Astrocyte of the cerebellum (primary cell): ENCODE measurements at regions of chr1 and their contacts with region 1.

Region 1: GRCh38 chr1:223429313-223429731 is 36.1 kb downstream of the CCDC185 start:
- DNase-seq: no peak
- H3K4me3 ChIP-seq: no peak overlapping the region
- CTCF ChIP-seq: no peak

Region 2: GRCh38 chr1:223393275-223394241 is 35.8 kb before region 1 on chr1 and contains the start of gene CCDC185:
- in situ Hi-C with region 1: no loop called
- DNase-seq: no peak
- H3K4me3 ChIP-seq: peak within 1 kb of the TSS; percentile 35
- CTCF ChIP-seq: no peak

Region 3: DNA sequence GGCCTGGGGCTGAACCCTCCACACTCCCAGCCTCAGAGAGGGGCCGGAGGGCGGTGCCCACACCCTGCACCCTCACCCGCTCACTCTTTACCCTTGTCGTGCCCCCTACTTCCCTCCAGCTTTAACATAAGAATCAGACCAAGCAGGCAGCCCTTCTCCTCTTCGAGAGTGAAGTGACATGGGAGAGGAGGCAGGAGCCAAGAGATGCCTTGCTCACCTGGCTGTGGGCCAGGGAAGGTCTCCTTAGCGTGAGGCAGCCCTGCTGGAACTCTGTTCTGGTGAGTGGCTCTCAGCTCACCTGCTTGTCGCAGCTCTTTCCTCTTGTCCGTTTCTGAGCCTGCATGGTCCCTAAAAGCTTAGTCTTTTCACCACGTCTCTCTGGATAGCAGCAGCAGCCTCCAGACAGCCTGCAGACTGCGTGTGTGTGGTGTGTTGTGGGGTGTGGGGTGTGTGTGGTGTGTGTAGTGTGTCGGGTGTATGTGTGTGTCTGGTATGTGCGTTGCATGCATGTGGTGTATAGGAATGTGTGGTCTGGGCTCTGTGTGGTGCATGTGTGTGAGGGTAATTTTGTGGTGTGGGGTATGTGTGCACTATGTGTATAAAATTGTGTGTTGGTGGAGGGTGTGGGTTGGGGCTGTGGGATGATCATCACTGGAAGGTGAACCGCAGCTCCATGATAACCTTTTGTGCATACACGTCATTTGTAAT is 50.5 kb after region 1 on chr1:
- in situ Hi-C with region 1: loop called (anchors 5 kb)
- DNase-seq: no peak
- H3K4me3 ChIP-seq: no peak overlapping the region
- CTCF ChIP-seq: no peak

Region 4: DNA sequence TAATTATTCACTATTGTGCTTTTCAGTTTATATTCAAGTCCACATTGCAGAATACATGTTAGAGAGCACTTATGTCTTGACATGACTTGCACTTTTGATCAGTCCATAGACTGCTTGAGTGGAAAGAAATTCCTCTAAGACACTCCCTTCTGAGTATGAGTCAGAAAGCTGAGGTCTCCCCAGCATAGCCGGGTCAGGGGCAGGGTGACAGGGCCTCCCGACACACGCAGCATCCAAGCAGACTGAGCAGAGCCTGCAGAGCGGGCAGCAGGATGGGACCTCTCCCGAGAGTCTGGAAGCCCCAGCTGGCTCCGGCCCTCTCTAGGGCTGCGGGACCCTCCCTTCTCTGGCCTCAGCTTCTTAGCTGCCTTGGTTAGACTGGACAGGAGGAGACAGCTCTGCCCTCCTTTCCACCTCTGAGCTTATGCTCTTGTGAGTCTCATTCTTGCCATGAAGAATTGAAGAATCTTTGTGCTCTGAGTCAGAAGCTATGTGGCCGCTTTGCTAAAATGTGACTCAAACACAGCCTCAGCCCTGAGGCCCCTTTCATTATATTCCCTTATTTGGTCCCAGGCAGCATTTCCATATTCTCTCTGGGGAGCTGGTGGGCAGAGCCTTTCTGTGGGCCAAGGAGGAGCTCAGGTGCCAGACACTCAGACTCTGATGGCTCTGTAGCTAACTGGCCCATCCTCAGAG is 271.8 kb after region 1 on chr1:
- in situ Hi-C with region 1: no loop called
- DNase-seq: peak; percentile 92
- H3K4me3 ChIP-seq: no peak overlapping the region
- CTCF ChIP-seq: no peak